Natural killer cell (primary cell): ENCODE measurements at regions of chr2 and their contacts with region 1.

Region 1: DNA sequence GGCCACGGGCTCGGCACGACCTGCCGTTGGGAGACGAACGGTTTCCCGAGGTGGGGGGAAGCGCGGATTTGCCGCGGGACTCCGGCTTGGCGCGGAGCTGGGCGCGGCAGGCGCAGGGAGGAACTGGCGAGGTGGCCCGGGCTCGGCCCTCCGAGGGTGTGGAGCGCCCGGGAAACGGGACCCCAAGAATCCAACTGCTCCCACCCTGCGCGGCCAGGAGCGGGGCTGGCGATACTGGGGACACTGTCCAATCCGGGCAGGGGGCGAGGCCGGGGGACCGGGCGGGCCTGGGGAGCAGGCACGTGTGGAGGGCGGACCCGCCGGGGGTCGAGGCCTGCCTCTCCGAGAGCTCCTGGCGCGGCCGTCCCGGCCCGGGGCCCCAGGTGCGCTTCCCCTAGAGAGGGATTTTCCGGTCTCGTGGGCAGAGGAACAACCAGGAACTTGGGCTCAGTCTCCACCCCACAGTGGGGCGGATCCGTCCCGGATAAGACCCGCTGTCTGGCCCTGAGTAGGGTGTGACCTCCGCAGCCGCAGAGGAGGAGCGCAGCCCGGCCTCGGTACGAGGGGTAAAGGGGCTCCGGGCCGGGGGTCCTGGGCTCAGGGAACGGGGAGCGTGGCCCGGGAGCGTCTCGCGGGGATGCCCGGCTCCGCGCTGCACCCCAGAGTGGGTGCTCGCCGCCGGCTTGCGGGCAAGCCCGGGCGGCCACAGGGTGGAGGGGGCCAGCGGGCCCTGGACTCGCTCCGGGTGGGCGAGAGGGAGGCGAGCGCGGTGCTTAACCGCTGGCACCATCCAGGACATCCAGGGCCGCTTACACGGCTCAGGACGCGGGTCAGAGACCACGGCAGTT is at the start of gene ANXA4:
- DNase-seq: peak; percentile 37 to 76
- ATAC-seq: peak; percentile 81 to 84 (median 82)
- H3K4me3 ChIP-seq: peak within 1 kb of the TSS; percentile 82
- H3K4me3 Mint-ChIP-seq: peak within 1 kb of the TSS; percentile 99
- H3K27ac ChIP-seq: peak within 1 kb of the TSS; percentile 54
- H3K27ac Mint-ChIP-seq: peak within 1 kb of the TSS; percentile 91 to 95
- H3K4me1 ChIP-seq: peaks cover 22% of the 10 kb centered on the region
- H3K4me1 Mint-ChIP-seq: peaks cover 31 to 39% of the 10 kb centered on the region in 2 donors
- H3K27me3 ChIP-seq: no peaks in the 10 kb centered on the region
- H3K27me3 Mint-ChIP-seq: no peaks in the 10 kb centered on the region
- CTCF ChIP-seq: no peak
- total RNA-seq, gene ANXA4: 44.6 to 63.6 (median 55.8) TPM

Region 2: DNA sequence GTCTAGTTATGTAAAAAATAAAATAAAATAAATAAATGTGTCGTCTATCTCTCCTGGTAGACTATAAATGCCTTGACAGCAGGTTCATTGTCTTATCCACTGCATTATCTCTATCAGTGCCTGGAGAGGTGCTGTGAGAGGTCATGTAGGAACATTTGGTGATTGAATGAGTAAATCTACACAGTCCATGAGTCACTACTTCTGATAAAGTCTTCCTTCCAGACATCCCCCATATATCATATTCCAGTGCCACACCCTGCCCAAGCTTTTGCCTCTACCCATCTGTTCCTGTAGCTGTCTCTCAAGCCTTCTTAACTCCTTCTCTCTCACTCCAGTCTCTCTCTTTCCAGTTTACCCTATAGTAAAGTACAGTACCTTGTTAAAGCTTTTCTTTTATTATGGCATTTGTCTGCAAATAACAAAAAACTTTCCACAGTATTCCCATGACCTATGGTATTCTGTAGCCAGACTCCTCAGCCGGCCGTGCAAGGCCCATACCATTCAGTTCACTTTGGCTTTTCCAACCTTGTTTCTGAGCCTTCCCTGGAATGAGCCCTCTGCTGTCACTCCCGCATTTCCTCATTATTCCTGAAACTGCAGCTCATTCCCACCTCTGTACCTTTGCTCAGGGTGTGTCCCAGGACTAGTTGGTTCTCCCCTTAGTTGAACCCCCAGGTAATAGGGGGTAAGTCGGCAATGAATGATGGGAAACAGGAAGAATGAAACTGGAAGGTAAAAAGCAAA is 37.6 kb after region 1 on chr2:
- intact Hi-C with region 1: loop called (anchors 5 kb)
- DNase-seq: no peak
- ATAC-seq: no peak
- H3K4me3 ChIP-seq: no peak overlapping the region
- H3K4me3 Mint-ChIP-seq: no peak overlapping the region
- H3K27ac ChIP-seq: no peak overlapping the region
- H3K27ac Mint-ChIP-seq: no peak overlapping the region
- H3K4me1 ChIP-seq: peaks cover 21% of the 10 kb centered on the region
- H3K4me1 Mint-ChIP-seq: peaks cover 35 to 37% of the 10 kb centered on the region in 2 donors
- H3K27me3 ChIP-seq: no peaks in the 10 kb centered on the region
- H3K27me3 Mint-ChIP-seq: no peaks in the 10 kb centered on the region
- CTCF ChIP-seq: no peak